K562 (cell line): ENCODE measurements at regions of chr18 and their contacts with region 1.

Region 1: DNA sequence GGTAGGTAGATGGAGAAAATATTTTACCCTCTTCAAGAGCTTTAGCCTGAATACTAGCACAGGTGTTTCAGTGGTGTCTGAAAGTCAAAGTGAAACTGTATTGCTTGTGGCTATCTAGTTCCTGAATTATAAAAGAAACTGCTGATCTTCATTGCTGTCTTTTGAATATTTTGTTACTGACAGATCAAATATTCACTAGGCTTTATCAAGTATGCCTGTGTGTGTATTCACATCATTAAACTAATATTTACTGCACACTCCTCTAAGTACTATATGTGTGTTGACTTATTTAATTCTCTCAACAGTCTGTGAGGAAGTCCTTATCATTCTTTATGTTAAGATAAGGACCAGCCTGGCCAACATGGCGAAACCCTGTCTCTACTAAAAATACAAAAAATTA is 139.6 kb downstream of the SOCS6 start:
- DNase-seq: no peak
- ATAC-seq: no peak
- H3K4me3 ChIP-seq: no peak overlapping the region
- H3K27ac ChIP-seq: no peak overlapping the region
- H3K4me1 ChIP-seq: peaks cover 0 to 2% of the 10 kb centered on the region in 2 experiments; a peak in 3 of 5 replicates
- H3K27me3 ChIP-seq: no peaks in the 10 kb centered on the region
- CTCF ChIP-seq: no peak
- EP300 ChIP-seq: no peak
- POLR2A ChIP-seq: no peak
- RAD21 ChIP-seq: no peak

Region 2: DNA sequence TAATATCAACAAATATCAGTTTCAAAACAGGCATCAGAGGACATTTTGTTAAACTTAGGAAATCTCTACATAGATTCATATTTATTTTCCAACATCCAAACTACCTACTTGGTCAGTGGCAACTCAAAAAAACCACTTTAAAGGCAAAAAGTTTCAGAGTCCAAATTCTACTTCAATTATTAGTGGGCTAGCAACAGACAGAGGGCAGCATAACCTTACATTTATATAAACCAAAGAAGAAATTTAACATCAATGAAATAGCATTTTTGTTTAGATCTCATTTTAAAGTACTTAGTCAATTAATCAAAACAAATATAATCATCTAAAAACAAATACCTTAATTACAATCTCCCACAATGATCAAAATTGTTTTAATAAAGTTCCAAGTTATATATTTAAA is 256.2 kb before region 1 on chr18:
- CTCF ChIA-PET with region 1: interaction called, 13 read pairs
- POLR2A ChIA-PET with region 1: no interaction called
- in situ Hi-C with region 1: no loop called
- intact Hi-C with region 1: no loop called
- DNase-seq: no peak
- ATAC-seq: no peak
- H3K4me3 ChIP-seq: no peak overlapping the region
- H3K27ac ChIP-seq: no peak overlapping the region
- H3K4me1 ChIP-seq: no peaks in the 10 kb centered on the region
- H3K27me3 ChIP-seq: no peaks in the 10 kb centered on the region
- CTCF ChIP-seq: peak in 1 of 3 experiments; percentile 27; a peak in 3 of 6 replicates
- EP300 ChIP-seq: no peak
- POLR2A ChIP-seq: no peak
- RAD21 ChIP-seq: peak in 1 of 2 experiments; percentile 28; a peak in 2 of 4 replicates

Region 3: DNA sequence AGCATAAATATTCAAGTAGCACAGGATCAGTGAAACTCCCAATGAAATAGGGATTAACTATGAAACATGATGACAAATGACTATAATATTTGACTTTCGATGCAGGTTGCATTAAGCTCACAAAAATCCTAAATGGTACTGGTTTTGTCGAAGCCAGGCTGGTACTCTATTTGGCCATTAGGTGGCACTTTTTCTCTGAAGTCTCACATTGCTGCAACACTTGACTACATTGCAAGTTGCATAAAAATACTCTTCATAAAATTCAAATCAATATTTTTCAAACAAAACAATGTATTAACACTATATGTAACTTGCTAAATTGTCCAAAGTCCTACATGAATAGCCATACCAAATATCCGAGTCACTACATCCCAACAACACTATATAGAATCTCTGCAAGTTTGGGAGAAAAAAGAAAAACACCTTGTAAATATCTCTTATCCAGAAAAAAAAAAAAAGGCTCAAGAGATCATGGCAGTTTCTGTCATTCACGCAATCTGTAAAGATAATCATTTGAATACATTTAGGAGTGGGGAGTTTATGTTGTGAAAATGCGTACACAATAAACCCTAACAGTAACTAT is 232.5 kb before region 1 on chr18:
- CTCF ChIA-PET with region 1: interaction called, 17 read pairs
- POLR2A ChIA-PET with region 1: no interaction called
- in situ Hi-C with region 1: no loop called
- intact Hi-C with region 1: no loop called
- DNase-seq: peak in 3 of 4 experiments; percentile 12 to 29 (median 16)
- ATAC-seq: peak; percentile 72
- H3K4me3 ChIP-seq: no peak overlapping the region
- H3K27ac ChIP-seq: no peak overlapping the region
- H3K4me1 ChIP-seq: no peaks in the 10 kb centered on the region
- H3K27me3 ChIP-seq: no peaks in the 10 kb centered on the region
- CTCF ChIP-seq: peak; percentile 50 to 66 (median 51); a peak in 5 of 6 replicates
- EP300 ChIP-seq: no peak
- POLR2A ChIP-seq: no peak
- RAD21 ChIP-seq: peak; percentile 76 to 77

Region 4: DNA sequence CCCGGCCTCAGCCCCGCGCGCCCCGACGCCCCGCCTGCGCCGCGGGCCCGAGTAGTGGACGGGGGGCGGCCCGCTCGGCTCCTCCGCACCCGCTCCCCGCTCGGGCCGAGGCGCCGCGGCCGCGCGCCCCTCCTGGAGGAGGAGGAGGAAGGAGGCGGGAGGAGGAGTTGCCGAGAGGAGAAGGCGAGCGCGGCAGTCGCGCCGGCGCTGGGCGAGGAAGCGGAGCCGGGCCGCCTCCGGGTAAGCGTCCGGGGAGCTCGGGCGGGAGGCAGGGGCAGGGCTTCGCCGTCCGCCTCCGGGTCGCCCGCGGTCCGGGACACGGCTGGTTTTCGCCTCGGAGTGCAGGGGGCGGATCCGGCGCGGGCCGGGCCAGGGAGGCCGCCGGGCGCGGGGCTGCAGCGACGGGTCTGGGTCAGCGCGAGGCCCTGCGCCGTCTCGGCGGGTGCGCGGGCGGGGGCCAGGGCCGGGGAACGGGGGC is 139.5 kb before region 1 on chr18 and contains the start of gene SOCS6:
- CTCF ChIA-PET with region 1: no interaction called
- POLR2A ChIA-PET with region 1: no interaction called
- in situ Hi-C with region 1: no loop called
- intact Hi-C with region 1: loop called (anchors 5 kb)
- DNase-seq: peak in 3 of 4 experiments; percentile 54 to 58 (median 55)
- ATAC-seq: peak; percentile 73
- H3K4me3 ChIP-seq: peak within 1 kb of the TSS; percentile 58
- H3K27ac ChIP-seq: peak within 1 kb of the TSS; percentile 70
- H3K4me1 ChIP-seq: peaks cover 15 to 22% of the 10 kb centered on the region in 2 experiments; a peak in 4 of 5 replicates
- H3K27me3 ChIP-seq: no peaks in the 10 kb centered on the region
- CTCF ChIP-seq: no peak
- EP300 ChIP-seq: no peak
- POLR2A ChIP-seq: peak; percentile 37; the same call in 1 of the 2 replicates
- RAD21 ChIP-seq: no peak
- polyA plus RNA-seq, gene SOCS6: 2.5 to 3.4 TPM

Region 5: GRCh38 chr18:70384181-70384790 is 44.2 kb before region 1 on chr18:
- CTCF ChIA-PET with region 1: interaction called, 3 read pairs
- POLR2A ChIA-PET with region 1: no interaction called
- in situ Hi-C with region 1: no loop called
- intact Hi-C with region 1: loop called (anchors 5 kb)
- DNase-seq: peak in 1 of 4 experiments; percentile 31
- ATAC-seq: peak; percentile 18; the same call in 2 of the 3 replicates
- H3K4me3 ChIP-seq: no peak overlapping the region
- H3K27ac ChIP-seq: no peak overlapping the region
- H3K4me1 ChIP-seq: peaks cover 6 to 9% of the 10 kb centered on the region in 2 experiments; a peak in 4 of 5 replicates
- H3K27me3 ChIP-seq: no peaks in the 10 kb centered on the region
- CTCF ChIP-seq: no peak
- EP300 ChIP-seq: no peak
- POLR2A ChIP-seq: no peak
- RAD21 ChIP-seq: no peak